ENCODE measurements at regions of chrX and their contacts with region 1.

Region 1: DNA sequence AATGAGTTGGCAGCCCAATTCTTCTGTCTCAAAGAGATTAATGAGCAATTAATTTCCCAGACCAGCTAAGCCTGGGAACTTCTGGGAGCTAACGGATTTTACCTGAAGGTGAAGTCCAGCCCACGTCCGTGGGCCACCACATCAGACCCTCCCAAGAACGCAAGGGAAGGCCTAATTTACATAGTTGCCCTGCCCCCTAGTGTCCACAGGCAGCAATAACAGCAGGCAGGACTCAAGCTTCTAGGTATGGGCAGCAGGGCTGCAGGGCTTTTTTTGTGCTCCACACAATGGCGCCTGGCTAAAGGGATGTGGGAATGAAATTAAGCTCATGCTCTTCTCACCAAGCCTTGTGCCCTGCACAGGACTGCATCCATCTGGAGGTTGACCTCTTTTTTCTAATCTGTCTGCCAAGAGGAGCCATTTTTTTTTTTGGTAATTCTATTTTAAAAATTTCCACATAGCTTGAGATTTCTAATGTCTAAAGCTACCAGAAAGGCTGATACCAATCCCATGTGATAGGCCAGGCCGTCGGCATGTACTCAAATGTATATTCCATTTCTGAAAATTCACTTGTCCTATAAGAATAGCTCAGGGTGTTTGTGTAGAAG is 111.9 kb upstream of the TMEM164 start:
- DNase-seq: peak; percentile 6 to 66 (median 26)
- ATAC-seq: no peak
- H3K4me3 ChIP-seq: no peak overlapping the region
- H3K4me3 Mint-ChIP-seq: no peak overlapping the region
- H3K27ac ChIP-seq: no peak overlapping the region
- H3K27ac Mint-ChIP-seq: no peak overlapping the region
- H3K4me1 ChIP-seq: no peaks in the 10 kb centered on the region
- H3K4me1 Mint-ChIP-seq: peaks cover 6% of the 10 kb centered on the region
- H3K27me3 ChIP-seq: no peaks in the 10 kb centered on the region
- H3K27me3 Mint-ChIP-seq: no peaks in the 10 kb centered on the region
- CTCF ChIP-seq: peak; percentile 73

Region 2: GRCh38 chrX:109485470-109486340 is 405.3 kb before region 1 on chrX:
- CTCF ChIA-PET with region 1: interaction called, 12 read pairs
- POLR2A ChIA-PET with region 1: no interaction called
- intact Hi-C with region 1: loop called (anchors 2 to 10 kb)
- DNase-seq: peak; percentile 19 to 78 (median 43)
- ATAC-seq: peak; percentile 78
- H3K4me3 ChIP-seq: no peak overlapping the region
- H3K4me3 Mint-ChIP-seq: no peak overlapping the region
- H3K27ac ChIP-seq: no peak overlapping the region
- H3K27ac Mint-ChIP-seq: no peak overlapping the region
- H3K4me1 ChIP-seq: no peaks in the 10 kb centered on the region
- H3K4me1 Mint-ChIP-seq: no peaks in the 10 kb centered on the region
- H3K27me3 ChIP-seq: peaks cover 0 to 3% of the 10 kb centered on the region in 2 experiments
- H3K27me3 Mint-ChIP-seq: no peaks in the 10 kb centered on the region
- CTCF ChIP-seq: peak; percentile 94

Region 3: GRCh38 chrX:109709129-109709631 is 181.8 kb before region 1 on chrX:
- CTCF ChIA-PET with region 1: interaction called, 15 read pairs
- POLR2A ChIA-PET with region 1: no interaction called
- intact Hi-C with region 1: loop called (anchors 1 to 10 kb)
- DNase-seq: peak in 3 of 14 experiments; percentile 8 to 28 (median 11)
- ATAC-seq: peak; percentile 57
- H3K4me3 ChIP-seq: no peak overlapping the region
- H3K4me3 Mint-ChIP-seq: peak overlapping the region; percentile 27
- H3K27ac ChIP-seq: no peak overlapping the region
- H3K27ac Mint-ChIP-seq: peak overlapping the region; percentile 37
- H3K4me1 ChIP-seq: peaks cover 9% of the 10 kb centered on the region
- H3K4me1 Mint-ChIP-seq: peaks cover 62% of the 10 kb centered on the region
- H3K27me3 ChIP-seq: no peaks in the 10 kb centered on the region
- H3K27me3 Mint-ChIP-seq: no peaks in the 10 kb centered on the region
- CTCF ChIP-seq: no peak

Region 4: DNA sequence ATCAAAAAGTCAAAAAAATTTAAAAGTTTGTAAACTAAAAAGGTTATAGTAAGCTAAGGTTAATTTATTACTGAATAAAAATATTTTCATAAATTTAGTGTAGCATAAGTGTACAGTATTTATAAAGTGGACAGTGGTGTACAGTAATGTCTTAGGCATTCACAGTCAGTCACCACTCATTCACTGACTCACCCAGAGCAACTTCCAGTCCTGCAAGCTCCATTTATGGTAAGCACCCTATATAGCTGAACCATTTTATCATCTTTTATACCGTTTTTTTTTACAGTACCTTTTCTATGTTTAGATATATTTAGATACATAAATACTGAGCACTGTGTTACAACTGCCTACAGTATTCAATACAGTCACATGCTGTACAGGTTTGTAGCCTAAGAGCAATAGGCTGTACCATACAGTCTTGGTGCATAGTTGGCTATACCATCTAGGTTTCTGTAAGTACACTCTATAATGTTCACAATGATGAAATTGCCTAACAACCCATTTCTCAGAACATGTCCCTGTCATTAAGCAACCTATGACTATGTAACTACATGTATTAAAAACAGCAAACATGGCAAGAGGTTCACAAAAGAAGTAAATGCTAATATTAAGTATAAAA is 176.6 kb before region 1 on chrX:
- CTCF ChIA-PET with region 1: interaction called, 15 read pairs
- POLR2A ChIA-PET with region 1: no interaction called
- intact Hi-C with region 1: loop called (anchors 1 to 10 kb)
- DNase-seq: no peak
- ATAC-seq: no peak
- H3K4me3 ChIP-seq: no peak overlapping the region
- H3K4me3 Mint-ChIP-seq: no peak overlapping the region
- H3K27ac ChIP-seq: no peak overlapping the region
- H3K27ac Mint-ChIP-seq: no peak overlapping the region
- H3K4me1 ChIP-seq: peaks cover 5% of the 10 kb centered on the region
- H3K4me1 Mint-ChIP-seq: peaks cover 37% of the 10 kb centered on the region
- H3K27me3 ChIP-seq: no peaks in the 10 kb centered on the region
- H3K27me3 Mint-ChIP-seq: no peaks in the 10 kb centered on the region
- CTCF ChIP-seq: no peak

Region 5: GRCh38 chrX:109774706-109775105 is 116.3 kb before region 1 on chrX:
- CTCF ChIA-PET with region 1: no interaction called
- POLR2A ChIA-PET with region 1: no interaction called
- intact Hi-C with region 1: no loop called
- DNase-seq: peak in 2 of 14 experiments; percentile 3 to 26
- ATAC-seq: no peak
- H3K4me3 ChIP-seq: no peak overlapping the region
- H3K4me3 Mint-ChIP-seq: no peak overlapping the region
- H3K27ac ChIP-seq: no peak overlapping the region
- H3K27ac Mint-ChIP-seq: no peak overlapping the region
- H3K4me1 ChIP-seq: no peaks in the 10 kb centered on the region
- H3K4me1 Mint-ChIP-seq: no peaks in the 10 kb centered on the region
- H3K27me3 ChIP-seq: no peaks in the 10 kb centered on the region
- H3K27me3 Mint-ChIP-seq: no peaks in the 10 kb centered on the region
- CTCF ChIP-seq: no peak

Region 6: DNA sequence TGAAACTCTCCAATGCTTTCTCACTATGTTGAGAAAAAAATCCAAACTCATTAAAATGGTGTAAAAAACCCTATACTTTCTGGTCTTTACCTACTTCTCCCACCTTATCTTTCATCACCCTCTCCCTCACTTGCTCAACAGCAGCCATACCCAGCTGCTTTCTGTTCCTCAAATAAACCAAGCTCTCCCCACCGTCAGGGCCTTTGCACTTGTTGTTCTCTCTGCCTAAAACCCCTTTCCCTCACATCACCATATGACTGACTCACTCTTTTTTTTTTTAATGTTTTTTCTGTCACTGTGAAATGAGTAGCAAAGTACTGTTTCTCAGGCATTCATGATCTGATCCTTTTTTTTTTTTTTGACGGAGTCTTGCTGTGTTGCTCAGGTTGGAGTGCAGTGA is 10.4 kb before region 1 on chrX:
- CTCF ChIA-PET with region 1: interaction called, 17 read pairs
- POLR2A ChIA-PET with region 1: no interaction called
- intact Hi-C with region 1: no loop called
- DNase-seq: peak in 3 of 14 experiments; percentile 6 to 49 (median 44)
- ATAC-seq: no peak
- H3K4me3 ChIP-seq: no peak overlapping the region
- H3K4me3 Mint-ChIP-seq: no peak overlapping the region
- H3K27ac ChIP-seq: no peak overlapping the region
- H3K27ac Mint-ChIP-seq: no peak overlapping the region
- H3K4me1 ChIP-seq: no peaks in the 10 kb centered on the region
- H3K4me1 Mint-ChIP-seq: no peaks in the 10 kb centered on the region
- H3K27me3 ChIP-seq: no peaks in the 10 kb centered on the region
- H3K27me3 Mint-ChIP-seq: no peaks in the 10 kb centered on the region
- CTCF ChIP-seq: no peak